Cardiac septum (tissue), 1 donor: ENCODE measurements at regions of chr10 and their contacts with region 1.

Region 1: DNA sequence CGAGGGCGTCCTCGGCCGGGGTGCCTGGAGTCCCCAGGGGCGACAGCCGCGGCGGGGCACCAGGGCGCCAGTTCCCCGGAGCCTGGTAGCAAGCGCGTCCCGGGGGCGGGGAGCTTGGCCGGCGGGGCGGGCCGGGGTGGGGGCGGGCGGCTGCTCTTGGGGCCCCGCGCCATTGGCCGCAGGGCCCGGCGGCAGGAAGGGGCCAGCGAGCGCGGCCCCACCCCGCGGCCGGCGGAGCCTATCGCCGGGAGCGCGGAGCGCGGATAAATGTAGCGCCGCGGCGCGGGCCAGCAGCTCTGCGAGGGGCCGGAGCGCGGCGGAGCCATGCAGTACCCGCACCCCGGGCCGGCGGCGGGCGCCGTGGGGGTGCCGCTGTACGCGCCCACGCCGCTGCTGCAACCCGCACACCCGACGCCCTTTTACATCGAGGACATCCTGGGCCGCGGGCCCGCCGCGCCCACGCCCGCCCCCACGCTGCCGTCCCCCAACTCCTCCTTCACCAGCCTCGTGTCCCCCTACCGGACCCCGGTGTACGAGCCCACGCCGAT is at the start of gene HHEX:
- DNase-seq: peak; percentile 85
- total RNA-seq, gene HHEX: 4.4 TPM

Region 2: DNA sequence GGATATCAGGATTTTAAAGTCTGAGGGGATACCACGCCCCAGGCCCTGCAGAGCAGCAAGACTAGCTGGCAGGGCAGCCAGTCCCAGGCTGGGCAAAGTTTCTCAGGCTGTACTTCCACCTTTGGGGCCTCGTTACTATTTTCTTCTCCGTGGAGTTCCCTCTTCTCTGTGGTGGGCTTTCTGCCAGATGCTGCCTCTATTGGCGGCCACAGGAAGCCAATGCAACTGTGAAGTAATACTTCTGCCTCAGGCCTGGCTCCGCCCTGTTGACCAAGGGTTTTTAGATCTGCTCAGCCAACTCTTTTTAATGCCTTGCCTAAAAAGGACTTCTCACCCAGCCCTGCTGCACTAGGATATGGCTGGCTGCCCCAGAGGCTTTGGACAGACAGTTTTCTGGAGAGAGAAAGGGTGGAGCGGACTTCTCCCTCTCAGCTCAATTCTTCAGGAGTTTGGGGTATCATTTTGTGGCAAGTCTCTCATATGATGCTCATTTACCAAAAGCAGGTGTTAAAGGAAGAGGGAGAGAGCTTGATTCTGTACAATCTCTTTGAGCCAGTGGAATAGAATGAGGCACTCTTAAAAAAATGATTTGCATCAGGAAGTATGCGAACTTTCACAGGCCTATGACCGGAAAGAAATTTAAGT is 67.5 kb after region 1 on chr10:
- intact Hi-C with region 1: loop called (anchors 2 kb)
- DNase-seq: peak; percentile 93